Activated CD4-positive, alpha-beta T cell treated with anti-CD3 and anti-CD28 coated beads for 36 hours (primary cell): ENCODE measurements at regions of chr16 and their contacts with region 1.

Region 1: GRCh38 chr16:57720142-57720575 is 15.4 kb upstream of the KATNB1 start:
- DNase-seq: peak; percentile 74
- ATAC-seq: peak; percentile 80
- H3K4me3 Mint-ChIP-seq: no peak overlapping the region
- H3K27ac Mint-ChIP-seq: no peak overlapping the region
- H3K4me1 Mint-ChIP-seq: no peaks in the 10 kb centered on the region
- H3K27me3 Mint-ChIP-seq: no peaks in the 10 kb centered on the region

Region 2: DNA sequence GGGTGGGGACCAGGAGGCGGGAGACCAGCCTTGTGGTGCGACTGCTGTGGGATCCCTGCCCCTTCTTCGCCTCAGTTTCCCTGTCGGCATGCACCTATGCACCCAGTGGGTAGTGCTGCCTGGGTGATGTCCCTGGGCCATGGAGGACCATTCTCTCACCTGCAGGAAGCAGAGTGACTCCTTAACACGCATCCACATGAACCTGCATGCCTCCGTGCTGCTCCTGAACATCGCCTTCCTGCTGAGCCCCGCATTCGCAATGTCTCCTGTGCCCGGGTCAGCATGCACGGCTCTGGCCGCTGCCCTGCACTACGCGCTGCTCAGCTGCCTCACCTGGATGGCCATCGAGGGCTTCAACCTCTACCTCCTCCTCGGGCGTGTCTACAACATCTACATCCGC is 152.5 kb before region 1 on chr16:
- CTCF ChIA-PET with region 1: no interaction called
- POLR2A ChIA-PET with region 1: no interaction called
- intact Hi-C with region 1: no loop called
- DNase-seq: no peak
- ATAC-seq: no peak
- H3K4me3 Mint-ChIP-seq: no peak overlapping the region
- H3K27ac Mint-ChIP-seq: no peak overlapping the region
- H3K4me1 Mint-ChIP-seq: peaks cover 6% of the 10 kb centered on the region
- H3K27me3 Mint-ChIP-seq: no peaks in the 10 kb centered on the region

Region 3: DNA sequence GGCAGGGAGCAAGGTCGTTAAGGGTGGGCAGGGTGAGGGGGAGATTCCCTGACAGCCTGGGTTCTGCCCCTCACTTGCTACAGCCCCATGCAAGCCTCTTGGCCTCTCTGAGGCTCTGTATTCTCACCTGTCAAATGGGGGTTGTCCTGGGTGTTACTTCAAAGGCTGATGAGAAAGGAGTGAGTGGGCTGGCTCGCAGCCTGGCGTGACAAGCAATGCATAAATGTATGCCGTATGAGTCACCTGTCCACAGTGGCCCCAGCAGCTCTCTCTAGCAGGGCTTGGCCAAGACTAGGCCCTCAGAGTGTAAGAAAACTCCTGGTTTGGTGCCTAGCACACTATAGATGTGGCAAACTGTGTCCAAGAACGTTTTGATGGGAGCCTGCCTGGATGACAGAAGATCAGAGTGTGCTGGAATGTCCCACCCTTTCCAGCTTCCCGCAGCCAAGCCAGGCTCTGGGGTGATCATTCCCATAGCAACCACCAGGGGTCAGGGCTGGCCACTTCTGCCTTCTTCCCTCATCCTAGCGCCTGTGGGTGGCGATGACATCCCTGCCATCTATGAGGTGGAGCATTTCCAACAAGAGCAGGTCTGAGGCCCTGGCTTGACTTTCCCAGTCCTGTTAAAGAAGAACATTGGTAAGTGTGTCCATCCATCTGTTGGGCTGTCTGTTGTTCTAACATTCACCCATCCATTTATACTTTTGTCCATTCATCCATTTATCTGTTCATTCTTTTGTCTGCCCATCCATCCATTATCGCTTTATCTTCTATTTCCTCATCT is 128.9 kb before region 1 on chr16:
- CTCF ChIA-PET with region 1: no interaction called
- POLR2A ChIA-PET with region 1: no interaction called
- intact Hi-C with region 1: loop called in 1 of 2 experiments (anchors 1 kb)
- DNase-seq: peak; percentile 87
- ATAC-seq: peak; percentile 90
- H3K4me3 Mint-ChIP-seq: peak overlapping the region; percentile 60
- H3K27ac Mint-ChIP-seq: peak overlapping the region; percentile 92
- H3K4me1 Mint-ChIP-seq: peaks cover 32% of the 10 kb centered on the region
- H3K27me3 Mint-ChIP-seq: no peaks in the 10 kb centered on the region

Region 4: DNA sequence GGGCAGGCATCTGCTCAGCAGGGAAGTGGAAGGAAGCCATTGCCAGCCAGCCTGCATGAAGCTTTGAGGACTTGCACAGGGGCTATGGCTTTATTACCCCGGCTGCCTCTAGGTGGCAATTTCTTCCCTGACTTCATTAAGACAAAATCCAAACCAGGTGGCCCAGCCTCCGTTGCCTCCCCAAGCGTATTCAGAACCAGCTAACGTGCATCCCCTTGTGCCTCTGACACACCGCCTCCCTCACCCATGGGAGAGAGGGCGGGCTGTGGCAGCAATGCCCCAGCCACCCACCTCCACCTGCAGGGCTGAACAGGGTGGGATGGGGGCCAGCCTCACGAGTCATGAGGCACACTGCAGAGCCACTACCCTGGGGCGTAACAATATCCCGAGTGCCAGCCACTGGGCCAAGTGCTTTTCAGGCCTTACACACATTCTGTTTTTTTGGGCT is 75.3 kb after region 1 on chr16:
- CTCF ChIA-PET with region 1: no interaction called
- POLR2A ChIA-PET with region 1: no interaction called
- intact Hi-C with region 1: no loop called
- DNase-seq: peak; percentile 62
- ATAC-seq: peak; percentile 78
- H3K4me3 Mint-ChIP-seq: no peak overlapping the region
- H3K27ac Mint-ChIP-seq: no peak overlapping the region
- H3K4me1 Mint-ChIP-seq: peaks cover 11% of the 10 kb centered on the region
- H3K27me3 Mint-ChIP-seq: peaks cover 9% of the 10 kb centered on the region